ENCODE measurements at regions of chr17 and their contacts with region 1.

Region 1: DNA sequence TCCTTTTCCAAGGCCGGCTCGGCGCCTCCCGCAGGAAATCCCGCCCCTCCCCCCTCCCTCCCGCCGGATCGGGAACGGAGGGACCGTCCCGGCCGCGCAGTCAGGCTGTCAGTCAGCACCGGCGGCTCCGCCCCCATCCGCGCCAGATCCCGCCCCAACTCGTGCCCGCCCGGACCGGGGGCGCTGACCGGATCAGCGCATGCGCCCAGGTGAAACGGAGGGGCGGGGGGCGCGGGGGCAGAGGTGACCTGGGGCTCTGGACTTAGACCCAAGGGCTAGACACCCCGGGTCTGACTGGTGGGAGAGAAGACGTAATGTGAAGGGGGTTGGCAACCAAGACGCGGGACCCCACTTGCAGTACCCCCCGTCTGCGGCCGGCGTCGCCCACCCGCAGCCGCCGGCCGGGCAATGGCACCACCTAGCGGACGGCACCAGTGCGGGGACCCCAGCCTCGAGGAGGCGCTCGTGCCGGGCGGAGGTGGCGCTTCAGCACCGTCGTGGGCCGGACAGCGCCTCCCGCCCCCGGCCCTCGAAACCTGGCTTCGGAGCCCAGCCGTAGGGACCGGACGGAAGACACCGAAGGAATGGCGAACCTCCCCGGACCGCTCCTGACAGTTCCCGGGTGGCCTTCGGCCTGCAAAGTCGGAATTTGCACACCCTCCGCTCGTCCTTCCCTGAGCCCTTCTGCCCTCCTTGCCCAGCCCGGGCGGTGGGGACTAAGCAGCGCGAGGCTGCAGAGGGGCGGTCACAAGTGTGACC is at the start of gene CASKIN2:
- DNase-seq: peak; percentile 82
- H3K4me3 Mint-ChIP-seq: peak within 1 kb of the TSS; percentile 65
- H3K27ac Mint-ChIP-seq: no peak within 1 kb of the TSS
- H3K4me1 Mint-ChIP-seq: peaks cover 30% of the 10 kb centered on the region
- H3K27me3 Mint-ChIP-seq: peaks cover 3% of the 10 kb centered on the region
- total RNA-seq, gene CASKIN2: 1.5 to 1.9 TPM

Region 2: DNA sequence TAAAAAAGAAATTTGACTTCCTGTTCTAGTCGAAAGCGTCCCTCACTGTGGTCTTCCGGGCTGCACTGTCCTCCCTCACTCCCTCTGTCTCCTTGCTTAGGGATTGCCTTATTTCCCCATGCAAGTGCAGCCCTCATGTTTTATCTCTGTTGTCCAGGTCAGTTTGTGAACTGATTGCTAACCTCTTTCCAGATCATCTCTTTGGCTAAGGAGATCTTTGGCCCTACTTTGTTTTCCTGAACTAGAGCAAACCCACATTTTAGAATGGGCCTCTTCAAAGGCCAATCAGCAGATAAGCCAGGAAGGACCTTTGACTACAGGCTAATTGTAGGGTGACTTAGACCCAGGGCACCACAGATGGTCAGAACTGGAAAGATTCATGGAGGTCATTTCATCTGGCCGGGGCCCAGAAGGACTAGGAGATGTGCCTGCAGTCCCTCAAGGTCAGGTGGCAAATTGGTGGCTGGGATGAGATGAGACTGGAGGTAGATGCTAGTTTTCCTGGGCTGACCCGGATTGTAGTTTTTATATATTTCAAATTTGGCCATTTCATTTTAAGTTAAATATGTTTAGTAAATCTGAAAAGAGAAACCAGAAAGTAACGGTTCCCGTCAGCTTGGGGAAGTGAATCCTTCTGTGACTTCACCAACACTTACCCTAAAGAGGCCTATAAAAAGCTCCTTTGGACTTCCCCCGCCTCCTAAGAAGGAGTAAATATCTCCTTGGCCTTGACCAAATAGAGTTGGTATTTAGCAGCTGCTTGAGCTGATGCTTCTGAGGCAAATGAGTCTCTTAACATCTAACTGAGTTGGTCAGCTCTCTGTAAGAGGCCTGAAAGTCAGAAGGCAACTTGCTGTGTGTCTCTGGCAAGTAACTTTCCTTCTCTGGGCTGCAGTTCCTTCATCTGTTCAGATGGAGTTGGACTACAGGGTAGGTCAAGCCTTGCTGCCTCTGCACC is 220.2 kb before region 1 on chr17:
- CTCF ChIA-PET with region 1: no interaction called
- POLR2A ChIA-PET with region 1: no interaction called
- DNase-seq: no peak
- H3K4me3 Mint-ChIP-seq: peak overlapping the region; percentile 46
- H3K27ac Mint-ChIP-seq: peak overlapping the region; percentile 87
- H3K4me1 Mint-ChIP-seq: peaks cover 36% of the 10 kb centered on the region
- H3K27me3 Mint-ChIP-seq: no peaks in the 10 kb centered on the region

Region 3: DNA sequence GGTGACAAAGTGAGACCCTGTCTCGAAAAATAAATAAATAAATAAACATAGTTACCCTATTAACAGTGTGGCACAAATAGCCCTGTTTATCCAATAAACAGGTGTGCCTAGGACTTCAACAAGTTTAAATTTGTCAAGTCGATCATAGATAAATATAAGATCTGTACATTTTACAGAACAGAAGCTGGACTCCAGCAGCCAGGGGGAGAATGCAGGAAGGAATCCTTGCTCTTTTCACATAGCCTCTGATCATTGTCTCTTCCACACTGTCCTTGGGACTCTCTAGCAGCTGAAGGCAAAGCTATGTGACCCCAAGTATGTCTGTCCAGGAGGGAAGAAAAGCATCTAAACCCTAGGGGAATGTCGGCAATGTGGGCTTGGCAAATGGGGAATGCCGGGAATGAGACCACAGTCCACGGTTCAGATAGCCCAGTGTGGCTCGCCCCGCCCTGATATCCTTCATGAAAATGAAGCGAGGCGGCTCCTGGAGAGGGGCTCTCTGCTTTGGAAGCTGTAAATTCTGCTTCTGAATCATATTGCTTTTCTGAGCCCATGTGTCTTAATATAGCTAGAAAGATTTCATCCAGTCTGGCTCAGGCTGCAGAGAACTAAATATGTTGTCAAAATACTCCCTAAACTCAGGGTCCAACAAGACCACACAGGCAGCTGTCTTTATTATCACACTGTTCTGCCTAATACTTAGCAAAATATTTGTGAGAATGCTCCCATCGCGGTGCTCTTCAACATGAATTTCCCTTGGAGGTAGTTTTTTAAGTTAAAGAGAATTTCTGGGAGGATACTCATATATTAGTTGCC is 85.3 kb before region 1 on chr17:
- CTCF ChIA-PET with region 1: interaction called, 10 read pairs
- POLR2A ChIA-PET with region 1: interaction called, 5 read pairs
- DNase-seq: no peak
- H3K4me3 Mint-ChIP-seq: no peak overlapping the region
- H3K27ac Mint-ChIP-seq: no peak overlapping the region
- H3K4me1 Mint-ChIP-seq: peaks cover 24% of the 10 kb centered on the region
- H3K27me3 Mint-ChIP-seq: peaks cover 14% of the 10 kb centered on the region

Region 4: GRCh38 chr17:75490953-75491649 is 24.6 kb before region 1 on chr17:
- CTCF ChIA-PET with region 1: no interaction called
- POLR2A ChIA-PET with region 1: no interaction called
- DNase-seq: no peak
- H3K4me3 Mint-ChIP-seq: no peak overlapping the region
- H3K27ac Mint-ChIP-seq: no peak overlapping the region
- H3K4me1 Mint-ChIP-seq: peaks cover 23% of the 10 kb centered on the region
- H3K27me3 Mint-ChIP-seq: no peaks in the 10 kb centered on the region

Region 5: DNA sequence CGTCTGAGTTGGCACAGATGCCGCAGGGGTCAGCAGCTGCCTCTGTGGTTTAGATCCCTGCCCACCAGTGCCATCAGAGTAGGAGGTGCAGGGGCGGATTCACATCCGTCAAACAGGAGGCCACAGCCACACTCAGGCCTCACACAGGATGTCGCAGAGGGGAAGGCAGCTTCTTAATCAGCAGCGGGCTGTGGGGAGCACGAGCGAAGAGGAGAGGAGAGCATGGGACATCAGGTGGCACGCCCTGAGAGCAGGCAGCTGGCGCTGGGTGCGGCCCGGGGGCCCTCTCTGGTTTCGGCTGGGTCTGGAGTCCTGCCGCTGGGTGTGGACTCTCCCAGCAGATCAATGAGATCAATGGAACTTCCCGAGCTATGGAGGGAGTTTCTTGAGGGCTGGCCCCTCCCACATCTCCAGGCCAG is 19.5 kb after region 1 on chr17:
- CTCF ChIA-PET with region 1: interaction called, 11 read pairs
- POLR2A ChIA-PET with region 1: interaction called, 45 read pairs
- DNase-seq: peak; percentile 88
- H3K4me3 Mint-ChIP-seq: peak overlapping the region; percentile 50
- H3K27ac Mint-ChIP-seq: peak overlapping the region; percentile 98
- H3K4me1 Mint-ChIP-seq: peaks cover 30% of the 10 kb centered on the region
- H3K27me3 Mint-ChIP-seq: no peaks in the 10 kb centered on the region

Measured in activated CD4-positive, alpha-beta memory T cell treated with anti-CD3 and anti-CD28 coated beads, Interleukin-2, amount 10 ng/mL, durations not matched to agents 7 days and 5 days (primary cell).